ENCODE measurements at regions of chr2 and their contacts with region 1.

Region 1: GRCh38 chr2:160241251-160242137 is 41.4 kb upstream of the ITGB6 start:
- DNase-seq: peak; percentile 84 to 87
- ATAC-seq: peak; percentile 78
- H3K4me3 ChIP-seq: no peak overlapping the region
- H3K27ac ChIP-seq: peak overlapping the region; percentile 20 to 73
- H3K4me1 ChIP-seq: peaks cover 4 to 10% of the 10 kb centered on the region in 2 donors
- H3K27me3 ChIP-seq: no peaks in the 10 kb centered on the region

Region 2: DNA sequence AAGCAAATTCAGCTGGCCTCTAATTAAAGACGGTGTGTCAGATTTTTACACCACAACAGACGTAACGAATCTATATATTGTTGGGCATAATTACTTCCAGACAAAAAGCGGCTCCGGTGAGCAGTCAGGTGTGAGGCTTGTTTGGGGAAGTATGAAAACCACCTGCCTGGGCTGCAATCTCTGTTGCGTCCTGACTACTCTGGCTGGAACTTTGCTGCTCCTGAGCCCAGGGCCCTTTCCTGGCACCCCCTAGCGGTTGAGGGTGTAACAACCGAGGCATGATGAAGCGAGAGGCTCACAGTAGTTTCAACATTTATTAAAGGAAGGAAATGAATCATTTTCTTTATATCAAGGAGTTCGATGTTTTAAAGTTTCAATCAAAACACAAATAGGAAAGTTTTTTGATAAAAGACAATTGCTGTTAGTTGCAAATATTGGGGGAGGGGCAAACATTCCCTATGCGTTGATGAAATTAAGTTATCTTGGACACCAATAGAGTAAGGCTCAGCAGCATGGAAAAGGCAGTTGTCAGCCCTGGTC is 30.8 kb before region 1 on chr2:
- intact Hi-C with region 1: loop called in 1 of 2 experiments (anchors 5 kb)
- DNase-seq: peak; percentile 80 to 81
- ATAC-seq: no peak
- H3K4me3 ChIP-seq: no peak overlapping the region
- H3K27ac ChIP-seq: no peak overlapping the region
- H3K4me1 ChIP-seq: no peaks in the 10 kb centered on the region
- H3K27me3 ChIP-seq: no peaks in the 10 kb centered on the region

Region 3: DNA sequence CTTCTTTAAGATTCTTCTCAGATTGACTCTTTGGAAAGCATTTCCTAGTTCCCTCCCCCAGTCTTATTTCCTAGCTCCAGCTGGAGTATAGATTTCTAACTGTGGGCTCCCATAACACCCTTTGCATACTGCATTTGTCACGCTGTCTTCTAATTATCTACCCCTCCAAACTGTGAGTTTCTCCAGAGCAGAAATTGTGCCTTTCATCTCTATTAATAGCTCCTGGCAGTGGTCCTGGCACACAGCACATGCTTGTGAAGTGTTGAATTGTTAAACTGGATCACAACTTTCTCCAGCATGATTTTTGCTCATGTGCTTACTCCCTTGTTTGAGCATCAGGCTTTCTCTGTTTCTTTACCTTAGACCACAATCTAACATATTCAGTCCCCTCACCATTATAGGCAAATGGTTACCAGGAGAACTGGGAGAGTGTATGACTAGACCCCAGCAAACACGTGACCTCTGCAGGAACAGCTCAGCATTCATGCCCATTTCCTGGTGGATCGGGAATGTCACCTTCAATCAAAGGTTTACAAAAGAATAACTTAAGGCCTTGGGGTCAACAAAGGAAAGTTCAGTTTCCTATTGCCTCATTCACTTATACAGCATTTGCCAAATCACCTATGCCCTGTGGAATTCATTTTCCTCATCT is 743.1 kb after region 1 on chr2:
- intact Hi-C with region 1: loop called in 1 of 2 experiments (anchors 10 kb)
- DNase-seq: no peak
- ATAC-seq: no peak
- H3K4me3 ChIP-seq: no peak overlapping the region
- H3K27ac ChIP-seq: no peak overlapping the region
- H3K4me1 ChIP-seq: peaks cover 0 to 3% of the 10 kb centered on the region in 2 donors
- H3K27me3 ChIP-seq: no peaks in the 10 kb centered on the region

Measured in aorta (tissue), 5 donors.